Caco-2 (cell line): ENCODE measurements at regions of chr11 and their contacts with region 1.

Region 1: DNA sequence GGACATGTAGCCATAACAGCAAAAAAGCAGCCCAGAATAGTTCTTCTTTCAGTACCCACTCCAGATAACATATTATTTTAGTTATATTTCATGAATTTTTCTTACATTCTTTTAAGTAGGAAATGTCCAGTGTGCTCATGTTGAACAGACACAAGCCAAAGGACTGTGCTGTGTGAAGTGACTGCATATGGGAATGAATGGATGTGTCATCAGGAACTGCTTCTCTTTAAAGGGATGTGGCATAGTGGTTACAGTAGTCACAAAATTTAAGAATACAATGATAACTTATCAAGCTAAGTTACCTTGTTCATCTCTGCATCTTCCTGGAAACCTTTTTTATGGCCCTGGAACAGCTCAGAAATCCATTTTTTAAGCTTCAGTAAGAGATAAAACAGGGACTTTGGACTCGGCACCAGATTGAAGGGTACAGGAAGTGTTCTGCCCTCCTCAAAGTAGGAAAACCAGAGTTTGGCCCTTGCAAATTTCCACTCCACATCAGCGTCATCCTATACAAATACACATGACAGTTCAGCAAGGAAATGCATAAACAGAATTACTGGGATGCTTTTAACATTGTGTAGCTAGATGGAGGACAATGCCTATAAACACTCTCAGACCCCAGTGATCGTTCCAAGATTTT is 112.8 kb downstream of the TRPC6 start:
- DNase-seq: peak; percentile 78 to 89
- H3K4me3 ChIP-seq: peak overlapping the region; percentile 24
- H3K4me3 Mint-ChIP-seq: peak overlapping the region; percentile 54
- H3K27ac Mint-ChIP-seq: peak overlapping the region; percentile 77
- H3K4me1 ChIP-seq: peaks cover 29% of the 10 kb centered on the region
- H3K4me1 Mint-ChIP-seq: peaks cover 28% of the 10 kb centered on the region
- H3K27me3 ChIP-seq: no peaks in the 10 kb centered on the region
- H3K27me3 Mint-ChIP-seq: no peaks in the 10 kb centered on the region
- CTCF ChIP-seq: no peak

Region 2: DNA sequence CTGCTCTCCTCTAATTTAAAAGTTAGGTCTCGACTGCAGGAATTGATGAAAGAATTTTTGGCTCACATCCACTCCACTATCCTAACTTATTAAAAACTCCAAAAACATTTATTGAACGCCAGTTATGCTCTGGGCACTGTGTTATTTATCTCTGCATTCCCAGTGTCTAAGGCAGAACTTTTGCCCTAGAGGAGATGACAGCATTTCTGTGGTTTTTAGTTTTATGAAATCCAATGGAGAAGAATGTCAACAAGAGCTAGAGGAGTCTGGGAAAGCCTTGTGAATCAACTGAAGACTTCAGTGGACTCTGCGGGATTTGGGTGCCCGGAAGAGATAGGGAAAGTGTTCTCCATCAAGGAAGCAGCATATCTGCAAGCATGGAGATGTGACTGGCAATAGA is 124.4 kb before region 1 on chr11:
- CTCF ChIA-PET with region 1: no interaction called
- POLR2A ChIA-PET with region 1: no interaction called
- intact Hi-C with region 1: no loop called
- DNase-seq: no peak
- H3K4me3 ChIP-seq: no peak overlapping the region
- H3K4me3 Mint-ChIP-seq: no peak overlapping the region
- H3K27ac Mint-ChIP-seq: no peak overlapping the region
- H3K4me1 ChIP-seq: no peaks in the 10 kb centered on the region
- H3K4me1 Mint-ChIP-seq: no peaks in the 10 kb centered on the region
- H3K27me3 ChIP-seq: no peaks in the 10 kb centered on the region
- H3K27me3 Mint-ChIP-seq: peaks cover 11% of the 10 kb centered on the region
- CTCF ChIP-seq: no peak

Region 3: GRCh38 chr11:101428918-101429317 is 42.1 kb before region 1 on chr11:
- CTCF ChIA-PET with region 1: interaction called, 3 read pairs
- POLR2A ChIA-PET with region 1: no interaction called
- intact Hi-C with region 1: loop called (anchors 2 kb)
- DNase-seq: peak in 1 of 2 experiments; percentile 65
- H3K4me3 ChIP-seq: no peak overlapping the region
- H3K4me3 Mint-ChIP-seq: peak overlapping the region; percentile 10
- H3K27ac Mint-ChIP-seq: no peak overlapping the region
- H3K4me1 ChIP-seq: peaks cover 22% of the 10 kb centered on the region
- H3K4me1 Mint-ChIP-seq: peaks cover 23% of the 10 kb centered on the region
- H3K27me3 ChIP-seq: no peaks in the 10 kb centered on the region
- H3K27me3 Mint-ChIP-seq: no peaks in the 10 kb centered on the region
- CTCF ChIP-seq: peak; percentile 74 to 79

Region 4: DNA sequence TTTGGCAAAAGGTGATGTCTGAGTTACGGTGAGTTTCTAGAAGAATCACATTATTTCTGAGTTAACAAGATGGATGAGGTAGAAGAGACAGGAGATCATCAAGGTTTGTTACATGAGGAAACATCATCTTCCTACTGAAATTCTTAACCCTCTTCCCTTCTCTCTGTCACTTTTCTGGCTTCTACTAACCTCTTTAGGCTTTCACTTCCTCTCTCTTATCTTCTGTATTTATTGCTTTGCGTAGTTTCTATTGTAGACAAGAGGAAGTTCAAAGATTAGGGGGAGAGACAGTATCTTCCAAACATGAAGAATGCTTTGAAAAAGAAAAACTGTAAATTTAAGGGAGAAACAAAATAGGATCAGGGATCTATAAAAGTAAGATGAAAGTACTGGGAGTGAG is 37.4 kb after region 1 on chr11:
- CTCF ChIA-PET with region 1: no interaction called
- POLR2A ChIA-PET with region 1: no interaction called
- intact Hi-C with region 1: loop called (anchors 2 kb)
- DNase-seq: no peak
- H3K4me3 ChIP-seq: no peak overlapping the region
- H3K4me3 Mint-ChIP-seq: no peak overlapping the region
- H3K27ac Mint-ChIP-seq: no peak overlapping the region
- H3K4me1 ChIP-seq: peaks cover 16% of the 10 kb centered on the region
- H3K4me1 Mint-ChIP-seq: peaks cover 9% of the 10 kb centered on the region
- H3K27me3 ChIP-seq: no peaks in the 10 kb centered on the region
- H3K27me3 Mint-ChIP-seq: no peaks in the 10 kb centered on the region
- CTCF ChIP-seq: no peak

Region 5: DNA sequence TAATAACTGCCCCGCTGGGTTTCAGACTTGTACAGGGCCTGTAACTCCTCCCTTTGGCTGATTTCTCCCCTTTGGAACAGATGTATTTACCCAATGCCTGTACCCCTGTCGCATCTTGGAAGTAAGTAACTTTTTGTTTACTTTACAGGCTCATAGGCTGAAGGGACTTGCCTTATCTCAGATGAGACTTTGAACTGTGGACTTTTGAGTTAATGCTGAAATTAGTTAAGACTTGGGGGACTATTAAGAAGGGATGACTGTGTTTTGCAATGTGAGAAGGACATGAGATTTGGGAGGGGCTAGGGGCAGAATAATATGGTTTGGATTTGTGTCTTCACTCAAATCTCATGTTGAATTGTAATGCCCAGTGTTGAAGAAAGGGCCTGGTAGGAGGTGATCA is 50.8 kb after region 1 on chr11:
- CTCF ChIA-PET with region 1: no interaction called
- POLR2A ChIA-PET with region 1: no interaction called
- intact Hi-C with region 1: loop called (anchors 1 kb)
- DNase-seq: peak in 1 of 2 experiments; percentile 43
- H3K4me3 ChIP-seq: no peak overlapping the region
- H3K4me3 Mint-ChIP-seq: no peak overlapping the region
- H3K27ac Mint-ChIP-seq: no peak overlapping the region
- H3K4me1 ChIP-seq: peaks cover 22% of the 10 kb centered on the region
- H3K4me1 Mint-ChIP-seq: peaks cover 18% of the 10 kb centered on the region
- H3K27me3 ChIP-seq: no peaks in the 10 kb centered on the region
- H3K27me3 Mint-ChIP-seq: no peaks in the 10 kb centered on the region
- CTCF ChIP-seq: no peak